Endothelial cell of umbilical vein (primary cell): ENCODE measurements at regions of chr15 and their contacts with region 1.

Region 1: DNA sequence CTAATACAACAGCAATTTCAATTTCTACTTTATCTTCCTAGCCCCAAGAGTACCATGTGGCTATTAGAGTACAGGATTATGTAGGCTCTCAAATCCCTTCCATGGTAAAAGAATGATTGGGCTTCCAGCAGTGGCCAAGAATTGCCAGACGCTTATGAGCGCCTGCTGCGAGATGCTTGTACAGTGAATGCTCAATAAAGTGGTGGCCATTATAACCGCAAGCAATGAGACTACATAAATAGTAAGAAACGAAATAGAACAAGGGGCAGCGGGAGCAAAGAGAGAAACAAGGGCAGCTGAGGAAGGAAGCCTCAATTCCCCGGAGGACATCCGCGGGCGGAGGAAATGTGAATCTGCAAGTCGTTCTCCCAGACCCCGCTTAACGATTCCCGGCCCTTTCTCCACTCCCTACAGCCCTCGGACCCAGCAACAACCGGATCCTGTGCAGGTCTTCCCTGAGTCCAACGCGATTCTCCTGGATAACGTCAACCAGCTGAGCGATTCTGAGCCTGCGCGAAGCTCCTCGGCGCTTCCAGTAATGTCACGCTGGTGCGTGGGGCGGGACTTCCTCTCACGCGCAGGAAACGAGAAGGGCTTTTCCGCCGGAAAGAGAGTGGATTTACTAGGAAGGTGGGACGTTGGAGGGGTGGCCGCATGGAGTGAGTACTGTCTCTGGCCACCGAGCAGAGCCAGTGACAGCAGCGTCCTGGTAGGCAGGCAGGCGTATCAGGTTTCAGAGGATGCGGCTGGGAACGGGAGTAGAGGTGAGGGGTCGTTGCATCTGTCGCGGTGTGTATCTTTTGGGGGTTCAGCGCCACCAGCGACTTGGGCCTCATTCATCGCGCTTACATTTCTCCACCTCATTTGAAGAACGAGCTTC is 40.5 kb upstream of the AP3B2 start:
- DNase-seq: peak; percentile 95
- H3K4me3 ChIP-seq: peak overlapping the region; percentile 61 to 85 (median 80)
- H3K27ac ChIP-seq: peak overlapping the region; percentile 48
- H3K4me1 ChIP-seq: peaks cover 15% of the 10 kb centered on the region
- H3K27me3 ChIP-seq: no peaks in the 10 kb centered on the region
- CTCF ChIP-seq: no peak
- POLR2A ChIP-seq: peak; percentile 96

Region 2: DNA sequence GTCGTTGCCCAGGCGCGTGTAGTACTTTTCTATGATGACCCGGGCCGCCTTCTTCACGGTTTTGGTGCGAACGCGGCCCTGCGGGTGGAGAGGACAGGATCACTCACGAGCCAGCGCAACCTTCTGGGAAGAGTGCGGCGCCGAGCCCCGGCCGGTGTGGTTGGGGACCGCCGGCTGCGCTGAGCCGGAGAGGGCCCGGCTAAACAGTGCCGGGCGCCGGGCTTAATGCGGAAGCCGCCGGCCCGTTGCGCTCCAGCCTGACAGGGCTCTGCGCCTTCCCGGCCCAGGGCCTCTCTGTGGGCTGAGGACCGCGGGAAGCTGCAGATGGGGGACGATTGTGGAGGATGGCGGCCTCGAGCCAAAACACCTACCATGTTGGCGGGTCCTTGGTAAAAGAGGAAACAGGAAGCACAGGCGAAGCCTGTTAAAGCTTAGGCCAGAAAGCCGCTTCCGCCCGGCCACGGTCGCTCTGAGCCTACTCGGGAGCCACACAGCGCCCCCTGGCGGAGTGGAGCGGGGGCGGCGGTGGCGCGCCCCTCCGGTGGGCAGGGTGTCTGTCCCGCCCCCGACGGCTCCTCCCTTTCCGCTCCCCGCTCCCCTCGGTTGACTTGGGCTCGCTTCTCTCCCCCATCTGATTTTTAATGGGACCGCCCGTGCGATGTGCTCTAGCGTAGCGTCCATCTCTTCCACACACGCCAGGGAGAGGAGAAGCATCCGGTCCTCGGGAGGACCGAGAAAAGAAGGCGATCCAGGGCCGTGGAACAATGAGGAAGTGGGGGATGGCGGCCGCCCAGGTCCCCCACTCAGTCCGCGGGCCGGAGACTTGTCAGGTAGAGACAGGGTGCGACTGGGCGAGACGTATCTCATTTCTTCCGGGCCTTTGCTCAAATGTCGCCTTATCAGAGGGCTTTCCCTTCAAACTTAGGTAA is 209.9 kb before region 1 on chr15 and contains the start of gene RPS17:
- CTCF ChIA-PET with region 1: interaction called, 9 read pairs
- POLR2A ChIA-PET with region 1: interaction called, 3 read pairs
- dilution Hi-C with region 1: no loop called
- intact Hi-C with region 1: loop called (anchors 5 kb)
- DNase-seq: peak; percentile 94
- H3K4me3 ChIP-seq: peak within 1 kb of the TSS; percentile 73 to 87 (median 86)
- H3K27ac ChIP-seq: peak within 1 kb of the TSS; percentile 56
- H3K4me1 ChIP-seq: peaks cover 17% of the 10 kb centered on the region
- H3K27me3 ChIP-seq: peaks cover 4 to 11% of the 10 kb centered on the region in 2 experiments
- CTCF ChIP-seq: peak; percentile 100
- POLR2A ChIP-seq: peak; percentile 99
- total RNA-seq, gene RPS17: 1,599 and 1,690 TPM in 2 replicates

Region 3: DNA sequence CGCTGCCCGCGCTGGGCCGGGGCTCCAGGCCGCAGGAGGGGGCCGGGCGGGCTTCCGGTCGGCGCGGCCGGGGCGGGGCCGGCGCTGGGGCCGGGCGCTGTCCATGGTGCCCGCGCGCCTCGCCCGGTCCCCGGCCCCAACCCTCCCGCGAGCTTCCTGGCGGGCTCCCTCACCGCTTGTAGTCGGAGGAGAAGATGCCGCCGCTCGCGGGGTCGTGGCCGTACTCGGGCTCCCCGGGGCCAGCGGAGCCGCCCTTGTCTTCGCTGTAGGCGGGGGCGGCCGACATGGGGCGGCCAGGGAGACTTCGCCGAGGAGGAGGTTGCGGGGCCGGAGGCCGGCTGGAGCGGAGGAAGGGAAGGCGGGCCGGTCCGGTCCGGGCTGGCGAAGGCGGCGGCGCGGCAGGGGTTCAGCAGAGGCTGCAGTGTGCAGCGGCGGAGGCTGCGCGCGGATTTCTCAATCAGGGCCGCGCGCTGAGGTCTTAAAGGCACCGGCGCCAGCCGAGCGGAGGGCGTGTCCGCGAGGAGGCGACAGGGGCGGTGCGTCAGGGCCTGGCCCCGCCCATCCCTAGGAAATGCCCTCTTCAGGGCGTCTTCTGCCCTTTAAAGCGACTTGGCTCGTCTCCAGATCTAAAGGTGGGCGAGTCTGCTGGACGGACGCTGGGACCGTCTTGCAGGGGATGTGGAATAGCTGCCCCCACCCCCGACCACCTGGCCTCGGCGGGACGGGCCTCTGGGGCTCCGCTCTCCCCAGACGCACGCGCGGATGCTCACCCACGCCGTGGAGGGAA is 40.6 kb before region 1 on chr15 and contains the start of gene AP3B2:
- CTCF ChIA-PET with region 1: interaction called, 3 read pairs
- POLR2A ChIA-PET with region 1: no interaction called
- dilution Hi-C with region 1: no loop called
- intact Hi-C with region 1: loop called (anchors 1 kb)
- DNase-seq: peak; percentile 41
- H3K4me3 ChIP-seq: peak within 1 kb of the TSS; percentile 42 to 50 (median 45)
- H3K27ac ChIP-seq: no peak within 1 kb of the TSS
- H3K4me1 ChIP-seq: peaks cover 2% of the 10 kb centered on the region
- H3K27me3 ChIP-seq: no peaks in the 10 kb centered on the region
- CTCF ChIP-seq: no peak
- POLR2A ChIP-seq: no peak
- total RNA-seq, gene AP3B2: not detected in 2 replicates

Region 4: DNA sequence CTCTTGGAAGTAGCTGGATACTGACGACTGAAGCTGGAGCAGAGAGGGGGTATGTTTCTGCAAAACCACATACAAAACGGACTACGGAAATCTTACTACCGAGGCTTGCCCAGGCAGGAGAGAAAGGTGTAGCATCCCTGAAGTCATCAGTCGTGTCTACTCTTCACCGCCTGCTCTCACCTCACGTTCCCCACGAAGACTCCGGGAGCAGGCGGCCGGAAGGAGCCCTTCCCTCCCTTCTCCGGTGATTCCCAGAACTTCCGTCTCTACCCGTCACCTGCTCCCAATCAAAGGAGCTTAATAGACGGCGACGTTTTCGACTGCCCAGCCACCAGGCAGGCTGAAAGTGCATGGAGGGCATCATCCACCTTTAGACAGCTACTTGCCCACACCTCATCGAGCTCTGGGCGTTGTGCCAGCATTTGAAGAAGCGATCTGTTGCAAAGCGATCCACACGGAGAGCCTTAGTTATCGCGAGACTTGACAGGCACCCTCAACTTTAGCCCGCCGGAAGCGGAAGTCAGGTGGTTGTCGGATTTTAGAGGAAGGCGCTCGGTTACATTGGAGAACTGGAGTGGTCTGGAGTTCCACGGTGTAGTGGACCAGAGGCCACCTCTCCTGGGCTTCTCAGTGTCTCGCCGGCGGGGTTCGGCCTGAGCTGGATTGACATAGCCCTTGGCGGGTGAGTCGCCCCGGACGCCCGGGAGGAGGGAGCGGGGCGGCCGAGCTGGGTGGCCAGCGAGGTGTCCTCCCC is 235.7 kb after region 1 on chr15 and contains the start of gene RAMAC:
- CTCF ChIA-PET with region 1: no interaction called
- POLR2A ChIA-PET with region 1: no interaction called
- dilution Hi-C with region 1: no loop called
- intact Hi-C with region 1: loop called (anchors 5 kb)
- DNase-seq: peak; percentile 92
- H3K4me3 ChIP-seq: peak within 1 kb of the TSS; percentile 65 to 88 (median 87)
- H3K27ac ChIP-seq: peak within 1 kb of the TSS; percentile 28
- H3K4me1 ChIP-seq: peaks cover 4% of the 10 kb centered on the region
- H3K27me3 ChIP-seq: no peaks in the 10 kb centered on the region
- CTCF ChIP-seq: no peak
- POLR2A ChIP-seq: peak; percentile 60
- total RNA-seq, gene RAMAC: 14.1 and 15.2 TPM in 2 replicates

Region 5: GRCh38 chr15:83066734-83067637 is 316.8 kb after region 1 on chr15 and contains the start of gene BTBD1:
- CTCF ChIA-PET with region 1: no interaction called
- POLR2A ChIA-PET with region 1: no interaction called
- dilution Hi-C with region 1: no loop called
- intact Hi-C with region 1: no loop called
- DNase-seq: peak; percentile 93
- H3K4me3 ChIP-seq: peak within 1 kb of the TSS; percentile 75 to 99 (median 98)
- H3K27ac ChIP-seq: peak within 1 kb of the TSS; percentile 66
- H3K4me1 ChIP-seq: peaks cover 36% of the 10 kb centered on the region
- H3K27me3 ChIP-seq: no peaks in the 10 kb centered on the region
- CTCF ChIP-seq: peak in 1 of 2 donors; percentile 14
- POLR2A ChIP-seq: peak; percentile 95
- total RNA-seq, gene BTBD1: 56.9 and 58.0 TPM in 2 replicates